A673 (cell line): ENCODE measurements at regions of chr2 and their contacts with region 1.

Region 1: GRCh38 chr2:157864857-157865430 is 11.2 kb downstream of the ACVR1 start:
- DNase-seq: no peak
- H3K4me3 ChIP-seq: no peak overlapping the region
- H3K27ac ChIP-seq: no peak overlapping the region
- H3K4me1 ChIP-seq: no peaks in the 10 kb centered on the region
- H3K27me3 ChIP-seq: no peaks in the 10 kb centered on the region
- CTCF ChIP-seq: no peak

Region 2: DNA sequence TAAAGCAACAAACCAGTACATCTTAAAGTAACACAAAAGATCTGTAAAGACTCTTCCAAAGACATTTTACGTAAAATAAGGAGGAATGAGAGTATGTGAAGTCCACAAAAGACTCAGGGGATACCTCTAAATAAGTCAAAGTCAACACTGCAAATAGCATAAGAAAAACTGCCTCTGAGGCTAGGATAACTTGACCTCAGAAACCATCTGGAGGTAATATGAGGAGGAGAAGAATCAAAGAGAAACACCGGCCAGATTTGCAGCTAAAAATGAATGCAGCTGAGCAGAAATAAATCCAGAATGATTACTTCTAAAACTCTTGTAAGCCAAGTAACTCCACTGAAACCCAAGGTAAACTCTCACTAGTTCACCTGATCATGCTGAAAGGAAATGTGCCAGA is 487.1 kb before region 1 on chr2:
- CTCF ChIA-PET with region 1: no interaction called
- POLR2A ChIA-PET with region 1: no interaction called
- intact Hi-C with region 1: no loop called
- DNase-seq: no peak
- H3K4me3 ChIP-seq: no peak overlapping the region
- H3K27ac ChIP-seq: no peak overlapping the region
- H3K4me1 ChIP-seq: no peaks in the 10 kb centered on the region
- H3K27me3 ChIP-seq: no peaks in the 10 kb centered on the region
- CTCF ChIP-seq: no peak

Region 3: GRCh38 chr2:157587576-157587975 is 277.4 kb before region 1 on chr2:
- CTCF ChIA-PET with region 1: no interaction called
- POLR2A ChIA-PET with region 1: no interaction called
- intact Hi-C with region 1: no loop called
- DNase-seq: no peak
- H3K4me3 ChIP-seq: no peak overlapping the region
- H3K27ac ChIP-seq: no peak overlapping the region
- H3K4me1 ChIP-seq: no peaks in the 10 kb centered on the region
- H3K27me3 ChIP-seq: peaks cover 11% of the 10 kb centered on the region
- CTCF ChIP-seq: no peak

Region 4: GRCh38 chr2:157825885-157826284 is 39.1 kb before region 1 on chr2:
- CTCF ChIA-PET with region 1: no interaction called
- POLR2A ChIA-PET with region 1: no interaction called
- intact Hi-C with region 1: no loop called
- DNase-seq: peak; percentile 58
- H3K4me3 ChIP-seq: no peak overlapping the region
- H3K27ac ChIP-seq: peak overlapping the region; percentile 35
- H3K4me1 ChIP-seq: peaks cover 1% of the 10 kb centered on the region
- H3K27me3 ChIP-seq: no peaks in the 10 kb centered on the region
- CTCF ChIP-seq: no peak

Region 5: GRCh38 chr2:157952558-157952957 is 87.6 kb after region 1 on chr2:
- CTCF ChIA-PET with region 1: no interaction called
- POLR2A ChIA-PET with region 1: interaction called, 11 read pairs
- intact Hi-C with region 1: no loop called
- DNase-seq: no peak
- H3K4me3 ChIP-seq: no peak overlapping the region
- H3K27ac ChIP-seq: no peak overlapping the region
- H3K4me1 ChIP-seq: no peaks in the 10 kb centered on the region
- H3K27me3 ChIP-seq: no peaks in the 10 kb centered on the region
- CTCF ChIP-seq: no peak